AG04449 (cell line): ENCODE measurements at regions of chr5 and their contacts with region 1.

Region 1: GRCh38 chr5:155136216-155136850 is 122.8 kb downstream of the KIF4B start:
- DNase-seq: no peak
- H3K4me3 ChIP-seq: no peak overlapping the region
- CTCF ChIP-seq: no peak

Region 2: DNA sequence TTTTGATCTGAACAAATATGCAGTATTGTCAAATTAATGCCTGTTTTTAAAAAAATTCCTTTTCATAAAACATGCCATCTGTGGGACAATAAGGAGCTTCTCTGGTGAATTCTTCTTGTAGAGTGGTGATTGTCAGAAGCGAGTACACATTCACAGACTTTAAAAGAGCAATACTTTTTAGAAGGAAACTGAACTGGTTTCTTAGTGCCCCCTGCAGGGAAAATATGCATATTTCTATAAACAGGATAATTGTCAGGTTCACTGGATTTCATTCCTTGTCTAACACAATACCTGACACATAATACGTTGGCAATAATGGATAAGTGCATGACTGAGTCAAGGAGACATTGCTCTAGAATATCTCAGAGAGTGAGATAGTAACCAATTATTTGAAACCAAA is 10.9 kb after region 1 on chr5:
- CTCF ChIA-PET with region 1: interaction called, 21 read pairs
- POLR2A ChIA-PET with region 1: no interaction called
- DNase-seq: no peak
- H3K4me3 ChIP-seq: no peak overlapping the region
- CTCF ChIP-seq: no peak

Region 3: GRCh38 chr5:157132281-157132612 is 1995.9 kb after region 1 on chr5:
- CTCF ChIA-PET with region 1: interaction called, 22 read pairs
- POLR2A ChIA-PET with region 1: no interaction called
- DNase-seq: no peak
- H3K4me3 ChIP-seq: no peak overlapping the region
- CTCF ChIP-seq: no peak